GM18951 (cell line): ENCODE measurements at regions of chr5 and their contacts with region 1.

Region 1: DNA sequence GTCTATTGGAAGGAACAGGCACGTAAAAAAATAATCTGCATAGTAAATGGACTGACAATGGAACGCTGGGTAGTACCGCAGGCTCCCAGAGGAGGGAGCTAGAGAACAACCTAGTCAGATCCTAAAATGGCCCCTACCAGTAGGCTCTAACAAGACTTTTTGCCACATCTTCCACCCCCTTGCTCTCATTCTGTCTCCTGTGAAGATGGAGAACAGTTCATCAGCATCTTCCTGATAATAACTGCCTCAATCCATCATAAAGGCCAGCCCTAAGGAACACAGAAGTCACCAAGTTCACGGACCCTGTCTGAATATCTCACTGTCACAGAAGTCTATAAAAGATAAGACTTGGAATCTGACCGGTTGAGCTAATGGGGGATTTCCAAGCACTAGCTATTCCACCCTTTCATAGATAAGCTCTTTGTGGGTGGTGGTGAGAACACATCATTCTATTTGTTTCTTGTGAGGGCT is 133.4 kb downstream of the SLC1A3 start:
- POLR2A ChIP-seq: no peak

Region 2: GRCh38 chr5:36866174-36866573 is 126.4 kb after region 1 on chr5:
- in situ Hi-C with region 1: loop called (anchors 10 kb)
- POLR2A ChIP-seq: no peak

Region 3: GRCh38 chr5:37005946-37006540 is 266.3 kb after region 1 on chr5:
- in situ Hi-C with region 1: loop called (anchors 10 kb)
- POLR2A ChIP-seq: no peak